Astrocyte of the cerebellum (primary cell): ENCODE measurements at regions of chr1 and their contacts with region 1.

Region 1: GRCh38 chr1:218613110-218613509 is 268.0 kb downstream of the TGFB2 start:
- DNase-seq: no peak
- H3K4me3 ChIP-seq: no peak overlapping the region
- CTCF ChIP-seq: no peak

Region 2: GRCh38 chr1:218546309-218546708 is 66.8 kb before region 1 on chr1:
- in situ Hi-C with region 1: loop called (anchors 5 kb)
- DNase-seq: no peak
- H3K4me3 ChIP-seq: no peak overlapping the region
- CTCF ChIP-seq: no peak

Region 3: DNA sequence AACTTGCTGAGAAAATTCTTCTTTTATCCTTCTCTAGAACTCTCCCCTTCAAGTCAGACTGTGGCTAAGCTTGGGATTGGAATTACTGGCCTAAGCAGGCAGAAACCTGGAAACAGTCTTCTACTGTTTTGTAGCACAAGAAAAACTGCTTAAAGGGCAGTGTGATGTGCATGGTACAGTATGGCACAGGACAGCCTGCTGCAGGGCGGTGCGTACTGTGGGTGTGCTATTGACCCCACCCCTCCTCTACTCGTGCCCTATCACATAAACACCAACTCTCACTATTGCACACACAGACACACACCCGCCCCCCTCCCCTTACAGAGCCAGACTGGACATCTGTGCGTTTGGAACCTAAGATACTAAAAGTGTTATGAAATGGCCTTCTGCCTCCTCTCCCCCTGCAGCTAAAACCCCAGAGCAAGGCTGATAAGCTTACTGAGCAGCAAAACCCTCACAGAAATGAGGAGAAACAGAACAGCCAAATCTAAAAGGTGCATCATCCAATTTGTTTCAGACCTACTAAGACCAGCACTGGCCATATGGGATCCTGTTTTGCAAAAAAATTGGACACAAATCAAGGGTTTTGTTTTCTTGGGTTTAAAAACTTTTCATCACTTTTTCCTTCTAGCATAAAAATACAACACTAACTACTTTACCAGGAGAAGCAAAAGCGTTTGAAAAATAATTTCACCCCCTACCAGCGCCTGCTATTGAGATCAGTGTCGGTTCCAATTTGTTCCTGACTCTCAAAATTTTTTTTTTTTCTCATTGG is 204.8 kb after region 1 on chr1:
- in situ Hi-C with region 1: no loop called
- DNase-seq: no peak
- H3K4me3 ChIP-seq: no peak overlapping the region
- CTCF ChIP-seq: no peak